Ovary (tissue), 10 donors: ENCODE measurements at regions of chr2 and their contacts with region 1.

Region 1: GRCh38 chr2:86368161-86368824 is 30.9 kb upstream of the REEP1 start:
- DNase-seq: peak; percentile 10 to 50 (median 34)
- H3K4me3 ChIP-seq: no peak overlapping the region
- H3K27ac ChIP-seq: no peak overlapping the region
- H3K4me1 ChIP-seq: no peaks in the 10 kb centered on the region
- H3K27me3 ChIP-seq: no peaks in the 10 kb centered on the region
- CTCF ChIP-seq: peak in 1 of 3 donors; percentile 23
- EP300 ChIP-seq: no peak
- POLR2A ChIP-seq: no peak

Region 2: DNA sequence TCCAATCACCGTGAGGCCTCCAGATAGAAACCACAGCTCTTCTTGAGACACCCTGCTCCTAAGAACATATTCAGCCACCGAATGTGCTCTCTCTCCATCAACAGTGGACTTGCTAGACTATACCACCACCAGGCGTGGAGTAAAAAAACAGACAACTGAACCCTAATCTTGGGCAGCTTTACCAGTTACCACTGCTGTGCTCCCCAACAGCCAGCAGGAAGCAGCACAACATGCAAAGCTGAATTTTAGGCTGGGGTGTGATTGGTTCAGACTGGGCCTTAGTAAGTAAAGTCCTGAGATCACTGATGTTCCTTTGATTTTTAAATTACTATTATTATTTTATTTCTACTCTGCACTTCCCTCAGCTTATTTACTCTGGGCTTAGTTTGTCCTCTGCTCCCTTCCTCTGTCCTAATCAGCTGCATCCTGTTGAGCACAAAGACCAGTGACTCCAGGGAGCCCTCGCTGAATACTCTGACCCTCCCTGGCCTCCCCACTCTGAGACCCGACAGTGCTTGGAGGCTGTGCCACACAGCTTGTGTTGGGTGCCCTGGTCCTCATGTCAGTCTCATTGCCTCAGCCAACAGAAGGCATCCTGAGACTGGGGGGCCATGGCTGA is 147.1 kb before region 1 on chr2:
- intact Hi-C with region 1: loop called in 2 of 4 experiments (anchors 5 to 10 kb)
- DNase-seq: peak in 4 of 5 donors; percentile 41 to 57 (median 53)
- H3K4me3 ChIP-seq: no peak overlapping the region
- H3K27ac ChIP-seq: no peak overlapping the region
- H3K4me1 ChIP-seq: peaks cover 7% of the 10 kb centered on the region
- H3K27me3 ChIP-seq: no peaks in the 10 kb centered on the region
- CTCF ChIP-seq: peak; percentile 42 to 56 (median 46)
- EP300 ChIP-seq: no peak
- POLR2A ChIP-seq: no peak

Region 3: DNA sequence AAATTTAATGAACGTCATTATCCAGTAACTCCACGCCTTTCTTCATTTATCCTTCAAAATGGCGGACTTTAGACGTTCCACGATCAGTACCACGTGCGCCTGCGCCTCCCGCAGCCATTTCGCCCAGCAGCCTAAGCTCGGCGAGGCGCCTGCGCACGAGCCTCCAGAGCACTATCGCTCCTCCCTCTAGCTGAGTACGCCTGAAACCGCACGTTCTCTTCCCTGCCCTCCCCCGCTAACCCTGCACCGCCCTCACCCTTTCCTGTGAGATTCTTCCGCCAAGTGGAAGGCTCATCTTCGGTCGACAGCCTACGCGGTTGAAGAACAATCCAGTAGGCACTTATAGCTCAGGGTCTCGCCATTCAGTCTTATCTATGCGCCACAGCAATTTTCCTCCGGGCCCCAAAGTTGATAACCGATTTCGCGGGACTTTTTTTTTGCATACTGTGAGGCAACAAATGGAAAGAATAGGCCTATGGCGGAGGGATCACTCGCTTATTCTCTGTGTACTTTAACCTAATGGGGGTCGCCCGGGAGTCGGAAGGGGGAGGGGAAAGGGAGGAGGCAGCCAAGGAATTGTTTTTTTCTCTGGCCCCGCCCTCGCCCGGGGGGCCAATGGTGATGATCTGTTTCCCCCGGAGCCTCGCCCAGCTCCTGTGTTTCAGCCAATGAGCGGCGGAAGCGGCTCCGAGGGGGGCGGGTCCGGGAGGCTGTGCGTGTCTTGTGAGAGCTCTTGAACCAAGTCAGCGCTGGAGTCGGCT is 72.5 kb after region 1 on chr2 and contains the start of gene KDM3A:
- intact Hi-C with region 1: no loop called
- DNase-seq: peak; percentile 99 to 100 (median 99)
- H3K4me3 ChIP-seq: peak within 1 kb of the TSS; percentile 68
- H3K27ac ChIP-seq: peak within 1 kb of the TSS; percentile 93 to 97
- H3K4me1 ChIP-seq: peaks cover 10% of the 10 kb centered on the region
- H3K27me3 ChIP-seq: no peaks in the 10 kb centered on the region
- CTCF ChIP-seq: peak in 1 of 3 donors; percentile 18
- EP300 ChIP-seq: no peak
- POLR2A ChIP-seq: peak; percentile 86
- total RNA-seq, gene KDM3A: 31.7 to 53.0 (median 40.8) TPM